Activated B cell treated with CpG ODN at 0.5 μM for 24 hours (primary cell): ENCODE measurements at regions of chr7 and their contacts with region 1.

Region 1: GRCh38 chr7:30238721-30239441 is 45.5 kb upstream of the ZNRF2 start:
- DNase-seq: no peak
- ATAC-seq: peak; percentile 69
- H3K4me3 Mint-ChIP-seq: peak overlapping the region; percentile 58
- H3K27ac Mint-ChIP-seq: peak overlapping the region; percentile 88
- H3K4me1 Mint-ChIP-seq: peaks cover 48% of the 10 kb centered on the region
- H3K27me3 Mint-ChIP-seq: no peaks in the 10 kb centered on the region
- CTCF ChIP-seq: no peak

Region 2: DNA sequence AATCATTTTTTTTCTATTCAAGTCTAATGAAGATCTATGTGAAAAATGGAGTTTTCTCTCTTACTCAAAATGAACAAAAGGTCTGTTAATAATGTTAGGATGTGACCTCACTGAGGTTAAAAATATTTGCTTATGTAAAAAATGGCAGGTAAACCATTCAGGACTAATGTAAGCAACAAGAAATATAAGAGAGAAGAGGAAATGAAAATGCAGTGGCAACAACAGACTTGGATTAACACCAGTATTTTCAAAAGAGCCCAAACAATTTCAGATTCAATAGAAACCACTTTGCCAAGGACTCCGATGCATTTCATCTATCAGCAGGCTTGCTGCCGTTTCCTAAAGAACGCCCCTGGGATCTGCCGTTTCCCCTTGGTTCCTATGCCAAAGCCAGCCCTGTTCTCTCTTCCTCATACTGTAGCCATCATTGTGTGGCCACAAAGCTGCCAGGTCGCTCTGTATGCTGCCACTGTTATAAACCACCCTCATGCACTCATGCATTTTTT is 37.7 kb before region 1 on chr7:
- CTCF ChIA-PET with region 1: no interaction called
- POLR2A ChIA-PET with region 1: interaction called, 3 read pairs
- intact Hi-C with region 1: loop called (anchors 1 kb)
- DNase-seq: no peak
- ATAC-seq: peak; percentile 81
- H3K4me3 Mint-ChIP-seq: peak overlapping the region; percentile 42
- H3K27ac Mint-ChIP-seq: peak overlapping the region; percentile 77
- H3K4me1 Mint-ChIP-seq: peaks cover 24% of the 10 kb centered on the region
- H3K27me3 Mint-ChIP-seq: no peaks in the 10 kb centered on the region
- CTCF ChIP-seq: no peak

Region 3: GRCh38 chr7:30268586-30268985 is 29.7 kb after region 1 on chr7:
- CTCF ChIA-PET with region 1: interaction called, 3 read pairs
- POLR2A ChIA-PET with region 1: interaction called, 10 read pairs
- intact Hi-C with region 1: no loop called
- DNase-seq: no peak
- ATAC-seq: no peak
- H3K4me3 Mint-ChIP-seq: no peak overlapping the region
- H3K27ac Mint-ChIP-seq: no peak overlapping the region
- H3K4me1 Mint-ChIP-seq: peaks cover 6% of the 10 kb centered on the region
- H3K27me3 Mint-ChIP-seq: no peaks in the 10 kb centered on the region
- CTCF ChIP-seq: no peak